ENCODE measurements at regions of chr1 and their contacts with region 1.

Region 1: DNA sequence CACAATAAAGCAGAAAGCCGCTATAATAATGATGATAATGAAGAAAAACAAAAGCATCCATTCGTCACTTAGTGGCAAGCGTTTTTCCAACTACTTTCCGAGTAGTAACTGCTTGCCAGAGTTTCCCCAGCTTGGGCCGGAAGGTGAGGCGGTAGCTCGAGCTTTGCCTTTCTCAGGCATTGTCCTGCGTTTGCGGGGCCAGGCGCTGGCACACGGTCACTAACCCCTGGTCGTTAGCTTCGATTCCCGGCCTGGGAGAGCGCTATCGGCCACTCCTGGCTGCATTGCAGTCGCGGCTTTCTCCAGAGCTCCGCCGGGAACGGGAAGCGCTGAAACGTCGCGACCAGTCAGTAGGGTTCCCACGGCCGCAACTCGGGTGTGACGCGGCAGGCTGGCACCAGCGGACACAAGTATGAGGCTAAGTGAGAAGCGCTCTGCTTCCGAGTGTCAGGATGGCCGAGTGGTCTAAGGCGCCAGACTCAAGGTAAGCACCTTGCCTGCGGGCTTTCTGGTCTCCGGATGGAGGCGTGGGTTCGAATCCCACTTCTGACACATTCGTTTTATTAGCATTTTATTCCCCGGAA is 14.6 kb upstream of the ZNF692 start:
- DNase-seq: peak; percentile 80 to 99 (median 91)
- ATAC-seq: peak; percentile 84
- H3K4me3 ChIP-seq: peak overlapping the region; percentile 86
- H3K4me3 Mint-ChIP-seq: peak overlapping the region; percentile 85 to 100 (median 97)
- H3K27ac ChIP-seq: peak overlapping the region; percentile 76
- H3K27ac Mint-ChIP-seq: peak overlapping the region; percentile 91 to 100 (median 99)
- H3K4me1 ChIP-seq: no peaks in the 10 kb centered on the region
- H3K4me1 Mint-ChIP-seq: peaks cover 8 to 31% (median 23%) of the 10 kb centered on the region in 7 donors
- H3K27me3 ChIP-seq: no peaks in the 10 kb centered on the region
- H3K27me3 Mint-ChIP-seq: peaks cover 0 to 26% (median 0%) of the 10 kb centered on the region in 5 donors

Region 2: DNA sequence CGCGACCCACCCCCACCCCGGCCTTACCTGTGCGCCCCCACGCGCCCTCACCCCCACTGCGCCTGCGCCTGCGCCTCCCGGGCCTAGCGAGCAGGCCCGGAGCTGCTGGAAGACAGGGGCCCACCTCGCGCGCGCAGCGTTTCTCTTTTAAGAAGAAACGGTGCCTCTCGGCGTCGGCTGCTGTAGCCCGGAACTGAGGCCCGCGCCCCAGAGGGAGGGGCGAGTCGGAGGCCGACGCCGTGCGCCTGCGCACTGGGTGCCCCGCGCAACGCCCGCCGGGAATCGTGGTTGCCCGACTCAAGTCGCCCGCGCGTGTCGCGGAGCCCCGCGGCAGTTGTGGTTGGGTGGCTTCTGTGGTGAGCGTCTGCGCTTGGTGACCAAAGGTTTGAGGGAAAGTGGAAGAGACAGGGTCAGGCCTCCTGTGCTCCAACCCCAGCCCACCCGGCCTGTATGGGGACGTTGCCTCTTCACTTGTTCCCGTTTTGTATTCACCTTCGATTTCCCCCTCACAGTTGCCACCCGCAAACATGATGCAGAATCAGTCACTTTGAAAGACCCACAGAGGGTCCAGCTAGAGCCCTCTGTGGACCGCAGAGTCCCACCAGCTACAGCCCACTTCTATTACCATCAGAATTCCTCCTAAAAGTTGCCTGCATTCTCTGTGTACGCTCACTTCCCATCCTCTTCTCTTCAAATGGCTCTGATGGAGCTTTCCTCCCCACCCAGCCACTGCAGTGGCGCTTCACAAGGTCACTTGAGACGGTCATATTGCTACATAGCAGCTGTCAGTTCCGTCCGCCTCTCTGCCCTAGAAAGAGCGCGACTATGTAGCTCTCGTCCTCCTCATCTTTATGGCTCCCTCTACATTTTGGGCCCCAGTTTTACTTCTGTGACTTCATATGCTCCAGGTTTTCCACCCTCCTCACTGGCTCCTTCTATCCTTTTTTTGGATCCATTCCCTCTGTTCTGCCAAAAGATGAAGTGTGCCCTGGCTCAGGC is 14.3 kb before region 1 on chr1 and contains the start of gene ZNF692:
- CTCF ChIA-PET with region 1: interaction called, 11 read pairs
- POLR2A ChIA-PET with region 1: interaction called, 78 read pairs
- intact Hi-C with region 1: loop called (anchors 1 kb)
- DNase-seq: peak; percentile 96 to 98 (median 97)
- ATAC-seq: peak; percentile 93
- H3K4me3 ChIP-seq: peak within 1 kb of the TSS; percentile 78
- H3K4me3 Mint-ChIP-seq: peak within 1 kb of the TSS; percentile 81 to 98 (median 91)
- H3K27ac ChIP-seq: peak within 1 kb of the TSS; percentile 81
- H3K27ac Mint-ChIP-seq: peak within 1 kb of the TSS; percentile 90 to 98 (median 96)
- H3K4me1 ChIP-seq: peaks cover 39 to 50% of the 10 kb centered on the region in 2 donors
- H3K4me1 Mint-ChIP-seq: peaks cover 23 to 60% (median 51%) of the 10 kb centered on the region in 7 donors
- H3K27me3 ChIP-seq: no peaks in the 10 kb centered on the region
- H3K27me3 Mint-ChIP-seq: no peaks in the 10 kb centered on the region
- total RNA-seq, gene ZNF692: 44.5 to 87.5 (median 68.0) TPM

Measured in naive thymus-derived CD4-positive, alpha-beta T cell (primary cell).